ENCODE measurements at regions of chr2 and their contacts with region 1.

Region 1: DNA sequence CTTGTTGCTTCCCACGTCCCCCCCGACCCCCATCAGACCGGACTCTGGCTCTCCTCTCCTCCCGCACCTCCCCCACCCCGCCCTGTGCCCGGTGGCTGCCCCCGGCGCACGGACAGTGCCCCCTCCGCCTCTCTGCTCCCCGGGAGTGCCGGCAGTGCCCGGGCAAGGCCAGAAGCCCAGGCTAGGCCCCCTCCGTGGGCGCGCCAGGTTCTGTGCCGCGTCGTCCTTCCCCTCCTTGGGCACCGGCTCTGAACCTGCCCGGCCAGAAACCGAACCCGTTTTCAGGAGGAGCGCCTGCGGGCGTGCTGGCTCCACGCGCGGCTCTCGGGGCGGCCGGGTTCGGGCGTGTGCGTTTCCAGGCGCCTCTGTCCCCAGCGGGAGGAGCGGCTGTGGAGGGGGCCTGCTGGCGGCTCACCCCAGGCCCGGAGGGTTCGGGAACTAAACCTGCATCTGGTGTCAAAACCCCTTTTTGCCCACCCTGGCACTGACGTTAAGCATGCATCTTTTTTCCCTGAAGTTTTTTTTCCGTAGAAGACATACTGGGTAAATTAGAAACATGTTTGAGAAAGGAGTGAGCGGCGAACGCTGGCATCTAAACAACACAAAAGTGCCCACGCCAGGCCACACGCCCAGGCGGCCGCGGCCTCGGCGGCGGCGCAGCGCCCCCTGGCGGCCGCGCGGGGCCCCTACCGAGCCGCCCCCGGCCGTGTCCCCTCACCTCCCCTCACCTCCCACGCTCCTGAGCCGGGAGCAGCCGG is 123.9 kb upstream of the SLC1A4 start:
- DNase-seq: peak; percentile 91

Region 2: GRCh38 chr2:64422466-64422865 is 442.8 kb before region 1 on chr2:
- intact Hi-C with region 1: loop called in 1 of 2 experiments (anchors 5 kb)
- DNase-seq: no peak

Region 3: GRCh38 chr2:64644177-64645004 is 220.9 kb before region 1 on chr2:
- intact Hi-C with region 1: loop called (anchors 1 to 2 kb)
- DNase-seq: peak; percentile 93

Region 4: DNA sequence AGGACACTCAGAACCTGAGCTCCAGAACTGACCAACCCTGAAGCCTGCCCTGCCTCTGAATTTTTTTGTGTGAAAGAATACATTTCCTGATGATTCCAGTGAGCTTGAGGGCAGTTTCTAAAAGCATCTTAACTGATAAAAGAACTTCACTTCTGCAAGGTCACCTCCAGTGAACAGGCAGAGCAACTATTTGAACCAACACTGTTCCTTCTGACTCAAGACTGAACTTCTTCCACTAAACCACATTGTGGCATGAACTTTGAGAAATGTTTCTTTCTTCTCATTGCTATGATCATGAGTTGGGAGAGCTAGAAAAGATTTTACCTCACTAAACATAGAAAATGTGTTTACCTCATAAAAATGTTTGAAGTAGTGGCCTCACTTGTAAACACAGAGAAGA is 127.7 kb before region 1 on chr2:
- intact Hi-C with region 1: no loop called
- DNase-seq: no peak

Region 5: DNA sequence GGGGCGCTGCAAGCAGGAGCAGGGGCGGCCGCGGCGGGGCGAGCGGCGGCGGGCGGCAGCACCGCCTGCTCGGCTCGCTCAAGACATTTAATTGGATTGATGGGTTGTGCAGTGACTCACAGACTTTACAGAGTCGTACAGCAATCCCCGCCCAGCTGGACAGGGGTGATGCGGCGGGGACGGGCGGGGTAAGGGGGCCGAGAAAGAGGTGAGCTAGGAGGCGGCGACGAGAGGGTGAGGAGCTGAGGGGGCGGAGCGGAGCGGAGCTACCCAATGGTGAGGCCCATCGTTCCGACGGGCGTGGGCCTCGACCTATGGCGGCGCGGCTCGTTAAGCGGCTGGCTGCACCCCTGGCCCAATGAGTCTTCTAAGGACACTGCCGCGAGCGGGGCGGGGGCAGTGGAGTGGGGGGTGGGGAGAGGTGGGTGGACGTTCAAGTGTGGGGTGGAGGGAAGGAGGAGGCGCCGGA is 114.4 kb before region 1 on chr2:
- intact Hi-C with region 1: loop called in 1 of 2 experiments (anchors 5 kb)
- DNase-seq: peak; percentile 100